GM12878 (cell line): ENCODE measurements at regions of chr2 and their contacts with region 1.

Region 1: GRCh38 chr2:216222650-216223352 is 113.7 kb downstream of the XRCC5 start:
- DNase-seq: peak; percentile 64
- ATAC-seq: peak; percentile 79
- H3K4me3 ChIP-seq: no peak overlapping the region
- H3K27ac ChIP-seq: peak overlapping the region; percentile 71
- H3K4me1 ChIP-seq: peaks cover 26% of the 10 kb centered on the region
- H3K27me3 ChIP-seq: no peaks in the 10 kb centered on the region
- CTCF ChIP-seq: peak; percentile 56 to 60 (median 57); a peak in 5 of 6 replicates
- EP300 ChIP-seq: peak in 1 of 2 experiments; percentile 66; a peak in 1 of 4 replicates
- POLR2A ChIP-seq: no peak
- RAD21 ChIP-seq: peak; percentile 84

Region 2: GRCh38 chr2:216206041-216206703 is 16.6 kb before region 1 on chr2:
- CTCF ChIA-PET with region 1: interaction called, 12 read pairs
- POLR2A ChIA-PET with region 1: interaction called, 5 read pairs
- RAD21 ChIA-PET with region 1: interaction called, 6 read pairs
- SMC1A ChIA-PET with region 1: interaction called, 29 read pairs
- in situ Hi-C with region 1: no loop called
- intact Hi-C with region 1: no loop called
- DNase-seq: peak; percentile 54
- ATAC-seq: peak; percentile 90
- H3K4me3 ChIP-seq: no peak overlapping the region
- H3K27ac ChIP-seq: peak overlapping the region; percentile 49
- H3K4me1 ChIP-seq: peaks cover 29% of the 10 kb centered on the region
- H3K27me3 ChIP-seq: no peaks in the 10 kb centered on the region
- CTCF ChIP-seq: no peak
- EP300 ChIP-seq: peak; percentile 64 to 91; a peak in 2 of 4 replicates
- POLR2A ChIP-seq: no peak
- RAD21 ChIP-seq: no peak

Region 3: DNA sequence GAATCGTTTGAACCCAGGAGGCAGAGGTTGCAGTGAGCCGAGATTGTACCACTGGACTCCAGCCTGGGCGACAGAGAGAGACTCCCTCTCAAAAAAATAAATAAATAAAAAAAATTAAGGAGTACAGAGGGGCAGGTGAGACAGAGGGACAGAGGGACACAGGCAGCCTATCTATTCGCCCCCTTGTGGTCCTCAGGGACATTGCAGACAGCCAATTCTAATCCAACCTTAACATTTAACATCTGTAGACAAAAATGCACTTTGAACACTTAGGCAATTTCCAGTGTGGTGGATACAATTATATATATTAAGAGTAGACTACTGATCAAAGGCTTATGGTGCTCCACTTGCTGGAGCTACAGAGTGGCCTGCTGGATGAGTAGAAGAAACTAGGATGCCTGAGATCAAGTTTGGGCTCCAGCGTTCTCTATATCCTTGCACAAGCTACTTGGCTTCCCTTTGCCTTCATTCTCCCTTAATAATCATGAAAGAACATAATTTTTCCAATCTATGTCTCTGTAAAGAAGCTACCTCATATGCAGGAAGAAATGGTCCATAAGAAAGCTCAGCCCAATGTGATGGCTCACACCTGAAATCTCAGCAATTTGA is 181.3 kb after region 1 on chr2:
- CTCF ChIA-PET with region 1: interaction called, 116 read pairs
- POLR2A ChIA-PET with region 1: interaction called, 3 read pairs
- RAD21 ChIA-PET with region 1: interaction called, 38 read pairs
- SMC1A ChIA-PET with region 1: interaction called, 84 read pairs
- in situ Hi-C with region 1: loop called (anchors 10 kb)
- intact Hi-C with region 1: loop called (anchors 2 kb)
- DNase-seq: no peak
- ATAC-seq: peak; percentile 89
- H3K4me3 ChIP-seq: no peak overlapping the region
- H3K27ac ChIP-seq: no peak overlapping the region
- H3K4me1 ChIP-seq: no peaks in the 10 kb centered on the region
- H3K27me3 ChIP-seq: no peaks in the 10 kb centered on the region; a peak in 1 of 4 replicates
- CTCF ChIP-seq: peak; percentile 65 to 86 (median 77)
- EP300 ChIP-seq: no peak
- POLR2A ChIP-seq: no peak
- RAD21 ChIP-seq: peak; percentile 64

Region 4: GRCh38 chr2:216498418-216499413 is 275.9 kb after region 1 on chr2 and contains the start of gene RPL37A:
- CTCF ChIA-PET with region 1: interaction called, 3 read pairs
- POLR2A ChIA-PET with region 1: no interaction called
- RAD21 ChIA-PET with region 1: interaction called, 6 read pairs
- SMC1A ChIA-PET with region 1: interaction called, 6 read pairs
- in situ Hi-C with region 1: no loop called
- intact Hi-C with region 1: loop called (anchors 5 kb)
- DNase-seq: peak; percentile 87
- ATAC-seq: peak; percentile 84
- H3K4me3 ChIP-seq: peak within 1 kb of the TSS; percentile 94
- H3K27ac ChIP-seq: peak within 1 kb of the TSS; percentile 88
- H3K4me1 ChIP-seq: peaks cover 23% of the 10 kb centered on the region
- H3K27me3 ChIP-seq: no peaks in the 10 kb centered on the region
- CTCF ChIP-seq: no peak
- EP300 ChIP-seq: no peak
- POLR2A ChIP-seq: peak; percentile 100
- RAD21 ChIP-seq: no peak
- polyA plus RNA-seq, gene RPL37A: 4,917 to 6,297 TPM

Region 5: DNA sequence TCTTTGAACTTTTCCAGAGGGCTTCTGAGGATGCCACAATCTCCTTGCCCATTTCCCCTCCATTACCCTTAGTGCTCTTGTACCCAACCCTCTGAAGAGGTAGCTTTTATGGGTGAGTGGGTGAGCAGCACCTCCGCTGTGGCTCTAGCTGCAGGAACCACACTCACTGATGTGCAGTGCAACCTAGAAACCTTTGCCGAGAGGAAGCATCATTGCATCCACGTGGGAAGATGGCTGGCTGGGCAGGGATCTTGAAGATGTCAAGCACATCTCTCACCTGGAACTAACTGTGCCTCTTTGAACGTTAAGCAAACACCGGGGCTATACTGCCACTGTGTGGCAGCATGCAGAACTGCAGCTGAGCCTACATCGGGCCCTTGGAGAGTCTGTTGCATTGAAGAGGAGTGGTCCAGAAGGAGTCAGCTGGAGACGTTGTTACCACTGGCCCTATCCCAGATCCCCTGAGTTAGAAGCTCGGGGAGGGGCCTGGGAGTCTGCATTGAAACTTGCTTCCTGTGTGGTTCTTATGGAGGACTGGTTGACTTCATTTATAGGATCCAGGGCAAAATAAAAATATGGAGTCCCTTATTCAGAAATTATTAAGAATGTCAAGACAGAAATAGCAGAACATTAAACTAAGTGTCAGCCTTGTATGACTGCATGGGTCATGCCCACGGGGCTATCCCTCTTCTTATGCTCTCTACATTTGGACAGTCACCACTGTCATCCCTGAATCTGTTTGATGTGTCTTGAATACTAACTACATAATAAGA is 443.8 kb after region 1 on chr2:
- CTCF ChIA-PET with region 1: interaction called, 28 read pairs
- POLR2A ChIA-PET with region 1: interaction called, 4 read pairs
- RAD21 ChIA-PET with region 1: interaction called, 7 read pairs
- SMC1A ChIA-PET with region 1: interaction called, 9 read pairs
- in situ Hi-C with region 1: loop called (anchors 10 kb)
- intact Hi-C with region 1: loop called (anchors 2 kb)
- DNase-seq: peak; percentile 19
- ATAC-seq: peak; percentile 92
- H3K4me3 ChIP-seq: no peak overlapping the region
- H3K27ac ChIP-seq: no peak overlapping the region
- H3K4me1 ChIP-seq: no peaks in the 10 kb centered on the region
- H3K27me3 ChIP-seq: peaks cover 2 to 5% of the 10 kb centered on the region in 2 experiments
- CTCF ChIP-seq: peak; percentile 98 to 100 (median 98)
- EP300 ChIP-seq: no peak
- POLR2A ChIP-seq: no peak
- RAD21 ChIP-seq: peak; percentile 97